Ascending aorta (tissue), 2 donors: ENCODE measurements at regions of chr5 and their contacts with region 1.

Region 1: DNA sequence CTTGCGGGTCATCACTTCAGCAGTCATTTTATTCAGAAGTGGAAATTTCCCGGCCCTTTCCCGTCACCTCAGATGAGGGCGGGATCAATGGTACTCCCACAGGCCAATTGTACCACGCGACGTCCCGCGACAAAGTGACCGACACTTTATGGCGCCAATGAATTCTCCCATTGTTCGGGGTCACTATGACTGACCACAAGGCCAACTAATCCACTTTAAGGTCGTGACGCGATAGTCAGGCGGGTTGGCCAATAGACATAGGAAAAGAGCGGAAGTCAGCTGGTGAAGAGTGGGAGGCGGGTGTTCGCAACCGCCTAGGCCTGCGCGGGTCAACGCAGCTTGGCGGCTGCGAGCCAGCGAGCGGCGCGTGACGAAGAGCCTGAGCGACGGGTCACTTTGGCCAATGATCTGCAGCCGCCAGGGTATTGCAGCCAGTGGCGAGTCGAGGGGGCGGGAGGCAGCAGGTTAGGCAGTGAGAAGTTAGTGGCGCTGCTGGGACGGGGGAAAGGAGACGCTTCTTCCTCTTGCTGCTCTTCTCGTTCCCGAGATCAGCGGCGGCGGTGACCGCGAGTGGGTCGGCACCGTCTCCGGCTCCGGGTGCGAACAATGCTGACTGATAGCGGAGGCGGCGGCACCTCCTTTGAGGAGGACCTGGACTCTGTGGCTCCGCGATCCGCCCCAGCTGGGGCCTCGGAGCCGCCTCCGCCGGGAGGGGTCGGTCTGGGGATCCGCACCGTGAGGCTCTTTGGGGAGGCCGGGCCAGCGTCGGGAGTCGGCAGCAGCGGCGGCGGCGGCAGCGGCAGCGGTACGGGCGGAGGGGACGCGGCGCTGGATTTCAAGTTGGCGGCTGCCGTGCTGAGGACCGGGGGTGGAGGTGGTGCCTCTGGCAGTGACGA is at the start of gene ANKHD1:
- DNase-seq: peak; percentile 99 to 100
- H3K4me3 ChIP-seq: peak within 1 kb of the TSS; percentile 81 to 95
- H3K27ac ChIP-seq: peak within 1 kb of the TSS; percentile 98 to 99
- H3K4me1 ChIP-seq: peaks cover 4 to 32% of the 10 kb centered on the region in 2 donors
- H3K27me3 ChIP-seq: no peaks in the 10 kb centered on the region
- CTCF ChIP-seq: no peak
- total RNA-seq, gene ANKHD1: 73.4 TPM

Region 2: DNA sequence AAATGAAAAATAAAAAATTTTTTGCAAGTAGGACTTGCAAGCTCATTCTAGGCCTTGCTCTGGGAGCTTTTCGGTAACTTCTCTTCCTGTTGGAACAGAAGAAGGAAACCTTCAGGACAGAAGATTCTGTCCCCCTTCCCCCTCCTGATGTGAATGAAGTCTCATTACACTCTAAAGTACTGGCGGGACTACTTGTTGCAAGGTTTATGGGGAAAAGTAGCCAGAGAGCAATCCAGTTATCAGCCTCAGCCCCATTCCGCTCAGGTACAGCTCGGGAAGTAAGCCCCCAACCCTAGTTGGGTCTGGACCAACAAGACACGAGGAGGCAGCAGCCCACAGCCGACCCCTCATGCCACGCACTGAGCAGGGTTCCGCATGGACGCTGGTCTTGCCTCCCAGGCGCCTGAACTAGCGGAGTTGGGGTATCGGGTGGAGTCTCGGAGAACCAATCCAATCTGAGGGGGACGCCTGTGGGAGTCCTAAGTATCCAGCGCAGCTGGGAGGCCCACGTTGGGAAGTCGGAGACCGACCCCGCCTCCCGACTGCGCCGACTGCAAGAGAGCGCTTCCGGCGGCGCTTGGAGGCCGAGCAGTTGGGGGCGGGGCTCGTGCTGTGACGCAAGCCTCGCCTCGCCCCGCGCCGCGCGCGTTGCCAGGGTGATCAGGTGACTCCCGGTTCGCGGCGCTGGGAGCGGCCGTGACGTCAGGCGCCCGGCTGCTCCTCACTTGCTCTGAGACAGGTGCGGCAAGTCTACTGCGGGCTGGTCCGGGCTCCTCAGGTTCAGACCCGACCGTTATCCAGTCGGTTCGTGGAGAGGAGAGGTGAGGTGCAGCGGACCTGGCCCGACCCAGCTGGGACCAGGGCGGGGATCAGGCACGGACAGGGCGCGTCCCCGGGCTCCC is 226.9 kb before region 1 on chr5 and contains the start of gene CYSTM1:
- intact Hi-C with region 1: loop called (anchors 1 kb)
- DNase-seq: peak; percentile 86 to 98
- H3K4me3 ChIP-seq: peak within 1 kb of the TSS; percentile 93
- H3K27ac ChIP-seq: peak within 1 kb of the TSS; percentile 96 to 98
- H3K4me1 ChIP-seq: peaks cover 4 to 28% of the 10 kb centered on the region in 2 donors
- H3K27me3 ChIP-seq: no peaks in the 10 kb centered on the region
- CTCF ChIP-seq: peak in 1 of 3 experiments; percentile 3
- total RNA-seq, gene CYSTM1: 66.3 TPM

Region 3: GRCh38 chr5:140302786-140303639 is 98.6 kb before region 1 on chr5 and contains the start of gene PFDN1:
- intact Hi-C with region 1: no loop called
- DNase-seq: peak; percentile 69 to 96
- H3K4me3 ChIP-seq: peak within 1 kb of the TSS; percentile 82 to 95
- H3K27ac ChIP-seq: peak within 1 kb of the TSS; percentile 79 to 84
- H3K4me1 ChIP-seq: peaks cover 6 to 20% of the 10 kb centered on the region in 2 donors
- H3K27me3 ChIP-seq: no peaks in the 10 kb centered on the region
- CTCF ChIP-seq: no peak
- total RNA-seq, gene PFDN1: 135 TPM

Region 4: GRCh38 chr5:140362860-140363630 is 38.6 kb before region 1 on chr5:
- intact Hi-C with region 1: no loop called
- DNase-seq: peak in 1 of 2 donors; percentile 77
- H3K4me3 ChIP-seq: peak overlapping the region; percentile 14 to 54
- H3K27ac ChIP-seq: no peak overlapping the region
- H3K4me1 ChIP-seq: peaks cover 0 to 3% of the 10 kb centered on the region in 2 donors
- H3K27me3 ChIP-seq: no peaks in the 10 kb centered on the region
- CTCF ChIP-seq: peak; percentile 71 to 94 (median 94)

Region 5: GRCh38 chr5:140557136-140557805 is 155.7 kb after region 1 on chr5 and contains the start of gene SRA1:
- intact Hi-C with region 1: loop called (anchors 2 kb)
- DNase-seq: peak; percentile 79 to 97
- H3K4me3 ChIP-seq: peak within 1 kb of the TSS; percentile 68 to 74
- H3K27ac ChIP-seq: peak within 1 kb of the TSS; percentile 82 to 88
- H3K4me1 ChIP-seq: peaks cover 0 to 18% of the 10 kb centered on the region in 2 donors
- H3K27me3 ChIP-seq: no peaks in the 10 kb centered on the region
- CTCF ChIP-seq: no peak
- total RNA-seq, gene SRA1: 47.3 TPM

Region 6: DNA sequence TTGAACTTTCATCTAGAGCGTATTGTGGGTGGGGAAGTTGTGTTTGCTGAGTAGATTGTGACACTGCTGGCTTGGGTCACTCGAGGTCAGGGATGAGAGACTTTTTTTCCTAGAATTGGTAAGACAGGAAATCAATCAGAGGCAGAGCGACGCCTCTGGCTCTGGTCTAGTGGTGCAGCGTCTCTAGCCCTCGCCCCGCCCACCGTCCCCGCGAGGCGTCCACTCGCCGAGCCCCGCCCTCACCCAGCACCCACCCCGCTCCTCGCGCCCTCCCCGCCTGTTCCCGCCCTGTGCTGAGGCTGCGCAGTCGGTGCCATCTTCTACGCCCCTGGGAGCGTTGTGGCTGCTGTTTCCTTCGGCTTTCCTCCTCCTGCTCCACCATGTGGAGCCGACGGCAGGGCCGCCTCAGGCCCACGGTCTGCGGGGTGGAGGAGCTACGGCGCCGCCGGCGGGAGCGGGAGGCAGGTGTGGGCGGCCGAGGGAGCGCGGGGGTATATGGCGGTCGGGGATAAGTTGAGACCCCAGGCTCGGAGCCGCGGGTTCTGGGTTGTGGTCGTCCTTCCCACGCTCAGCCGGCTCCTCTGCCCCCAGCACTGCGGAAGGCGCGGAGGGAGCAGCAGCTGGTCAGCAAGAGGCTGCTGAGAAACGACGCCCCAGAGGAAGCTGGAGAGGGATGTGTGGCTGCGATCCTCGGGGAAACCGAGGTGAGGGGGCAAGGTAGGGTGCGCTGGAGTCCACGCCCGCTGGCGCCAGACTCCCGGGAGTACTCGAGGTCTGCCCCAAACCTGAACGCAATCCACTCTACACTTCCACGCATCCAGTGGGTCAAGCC is 237.8 kb after region 1 on chr5 and contains the start of gene TMCO6:
- intact Hi-C with region 1: loop called (anchors 1 kb)
- DNase-seq: peak; percentile 83 to 98
- H3K4me3 ChIP-seq: peak within 1 kb of the TSS; percentile 61 to 86
- H3K27ac ChIP-seq: peak within 1 kb of the TSS; percentile 85 to 89
- H3K4me1 ChIP-seq: peaks cover 3 to 8% of the 10 kb centered on the region in 2 donors
- H3K27me3 ChIP-seq: no peaks in the 10 kb centered on the region
- CTCF ChIP-seq: peak; percentile 25 to 76 (median 70)
- total RNA-seq, gene TMCO6: 87.7 TPM

Region 7: DNA sequence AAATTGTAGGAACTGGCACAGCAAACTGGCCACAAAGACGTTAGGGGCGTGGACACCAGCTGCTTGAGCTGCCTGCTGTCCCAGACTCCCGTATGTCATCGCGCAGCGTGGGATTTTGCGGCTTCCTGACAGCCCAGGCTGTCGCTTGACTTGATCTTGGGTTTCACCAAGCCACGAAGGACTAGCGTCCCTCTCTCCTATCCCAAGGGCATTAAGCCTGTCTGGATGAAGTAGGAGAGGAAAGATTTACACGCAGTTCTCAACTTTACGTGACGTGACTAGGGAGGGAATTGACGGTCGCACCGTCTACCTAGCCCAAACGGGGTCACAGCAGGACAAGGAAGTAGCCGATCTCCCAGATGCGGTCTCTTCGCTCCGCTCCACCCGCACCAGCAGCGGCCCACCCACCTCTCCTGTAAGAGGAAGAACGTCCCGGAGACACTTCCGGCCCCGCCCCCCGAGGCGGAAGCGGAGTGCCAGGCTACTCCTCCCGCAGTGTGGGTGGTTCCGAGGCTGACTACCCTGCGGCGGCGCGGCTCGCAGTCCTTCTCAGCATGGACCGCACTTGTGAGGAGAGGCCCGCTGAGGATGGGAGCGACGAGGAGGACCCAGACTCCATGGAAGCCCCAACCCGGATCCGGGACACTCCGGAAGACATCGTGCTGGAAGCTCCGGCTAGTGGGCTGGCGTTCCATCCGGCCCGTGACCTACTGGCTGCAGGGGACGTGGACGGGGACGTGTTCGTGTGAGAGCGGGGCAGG is 262.9 kb after region 1 on chr5 and contains the start of gene WDR55:
- intact Hi-C with region 1: loop called (anchors 1 kb)
- DNase-seq: peak; percentile 90 to 98
- H3K4me3 ChIP-seq: peak within 1 kb of the TSS; percentile 59 to 81
- H3K27ac ChIP-seq: peak within 1 kb of the TSS; percentile 88 to 89
- H3K4me1 ChIP-seq: peaks cover 5 to 8% of the 10 kb centered on the region in 2 donors
- H3K27me3 ChIP-seq: no peaks in the 10 kb centered on the region
- CTCF ChIP-seq: no peak
- total RNA-seq, gene WDR55: 10.1 TPM